ENCODE measurements at regions of chr11 and their contacts with region 1.

Region 1: GRCh38 chr11:75582895-75583717 is 21.1 kb downstream of the SERPINH1 start:
- DNase-seq: peak; percentile 87
- H3K4me3 ChIP-seq: peak overlapping the region; percentile 68 to 92 (median 80)
- H3K27ac ChIP-seq: peak overlapping the region; percentile 94 to 99 (median 98)
- H3K4me1 ChIP-seq: peaks cover 3 to 18% (median 16%) of the 10 kb centered on the region in 4 donors
- H3K27me3 ChIP-seq: no peaks in the 10 kb centered on the region
- CTCF ChIP-seq: peak in 2 of 4 experiments; percentile 12 to 76
- EP300 ChIP-seq: no peak
- POLR2A ChIP-seq: peak in 1 of 2 donors; percentile 85

Region 2: DNA sequence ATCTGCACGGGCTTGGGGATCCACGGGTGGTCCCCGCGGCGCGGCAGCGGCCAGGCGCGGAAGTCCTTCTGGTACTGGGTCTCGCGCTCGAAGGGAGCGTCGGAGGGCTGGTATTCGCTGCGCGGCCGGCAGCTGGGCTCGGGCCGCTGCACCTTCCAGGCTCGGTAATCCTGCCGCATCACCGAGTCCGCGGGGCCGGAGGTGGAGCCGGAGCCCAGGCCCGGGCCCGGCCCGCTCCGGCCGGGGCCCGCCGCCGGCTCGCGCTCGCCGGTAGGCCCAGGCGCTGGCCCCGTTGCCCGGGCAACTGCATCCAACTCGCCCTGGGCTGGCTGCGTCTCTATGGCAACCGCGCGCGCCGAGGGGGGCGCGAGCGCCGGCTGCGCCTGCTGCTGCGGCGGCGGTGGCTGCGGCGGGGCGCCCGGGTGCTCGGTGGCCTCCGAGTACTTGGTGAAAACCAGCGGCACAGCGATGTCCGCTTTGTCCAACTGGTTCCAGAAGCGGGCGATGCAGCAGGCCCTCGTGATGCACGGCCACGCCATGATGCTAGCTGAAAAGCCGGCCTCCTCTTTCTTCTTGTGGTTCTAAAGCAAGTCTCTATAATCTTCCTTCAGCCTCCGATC is 84.8 kb after region 1 on chr11:
- intact Hi-C with region 1: loop called (anchors 5 kb)
- DNase-seq: peak; percentile 79
- H3K4me3 ChIP-seq: peak overlapping the region; percentile 42 to 74 (median 62)
- H3K27ac ChIP-seq: peak overlapping the region; percentile 75 to 82 (median 80)
- H3K4me1 ChIP-seq: peaks cover 0 to 25% (median 20%) of the 10 kb centered on the region in 4 donors
- H3K27me3 ChIP-seq: no peaks in the 10 kb centered on the region
- CTCF ChIP-seq: no peak
- EP300 ChIP-seq: no peak
- POLR2A ChIP-seq: no peak

Region 3: DNA sequence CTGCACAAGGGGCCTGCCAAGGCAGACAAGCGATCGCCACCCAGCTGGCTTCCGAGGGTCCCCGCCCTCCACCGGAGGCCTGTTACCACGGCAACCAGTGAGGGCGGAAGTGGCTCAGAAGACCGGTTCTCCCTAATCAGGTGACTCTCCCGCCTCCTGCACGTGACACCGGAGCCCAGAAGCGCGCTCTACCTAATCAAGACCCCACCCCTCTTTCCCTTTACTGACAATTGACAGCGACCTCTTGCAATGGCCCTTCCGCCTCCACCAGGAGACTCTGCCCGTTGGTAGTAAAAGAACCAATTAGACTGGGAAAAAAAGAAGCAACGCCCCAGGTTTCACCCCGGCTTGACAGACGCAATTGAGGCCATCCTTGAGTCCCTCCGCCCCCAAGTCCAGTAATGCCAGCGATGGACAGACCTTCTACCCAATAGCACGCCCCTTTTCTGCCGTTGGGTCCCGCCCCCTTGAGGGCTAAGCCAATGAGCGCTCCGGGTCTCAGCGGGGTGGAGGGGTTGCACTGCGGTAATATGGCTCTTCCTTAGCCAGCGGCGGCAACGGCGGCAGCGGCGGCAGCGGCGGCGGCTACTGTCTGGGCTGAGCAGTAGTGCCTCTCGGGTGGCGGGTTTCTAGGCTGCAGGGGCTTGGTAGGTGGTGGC is 231.7 kb after region 1 on chr11 and contains the start of gene UVRAG:
- intact Hi-C with region 1: loop called (anchors 10 kb)
- DNase-seq: peak; percentile 99
- H3K4me3 ChIP-seq: peak within 1 kb of the TSS; percentile 89 to 98 (median 94)
- H3K27ac ChIP-seq: peak within 1 kb of the TSS; percentile 94 to 98 (median 96)
- H3K4me1 ChIP-seq: peaks cover 0 to 42% (median 28%) of the 10 kb centered on the region in 4 donors
- H3K27me3 ChIP-seq: no peaks in the 10 kb centered on the region
- CTCF ChIP-seq: peak in 3 of 4 experiments; percentile 15 to 36 (median 19)
- EP300 ChIP-seq: peak in 1 of 4 donors; percentile 37
- POLR2A ChIP-seq: peak; percentile 77 to 83
- total RNA-seq, gene UVRAG: 29.3 to 43.2 (median 35.6) TPM

Measured in sigmoid colon (tissue), 7 donors.